Ascending aorta (tissue), 2 donors: ENCODE measurements at regions of chr1 and their contacts with region 1.

Region 1: GRCh38 chr1:160837558-160838205 is 25.0 kb downstream of the CD244 start:
- DNase-seq: peak in 1 of 2 donors; percentile 67
- H3K4me3 ChIP-seq: no peak overlapping the region
- H3K27ac ChIP-seq: no peak overlapping the region
- H3K4me1 ChIP-seq: no peaks in the 10 kb centered on the region
- H3K27me3 ChIP-seq: no peaks in the 10 kb centered on the region
- CTCF ChIP-seq: no peak

Region 2: GRCh38 chr1:160951443-160952128 is 113.9 kb after region 1 on chr1:
- intact Hi-C with region 1: loop called (anchors 5 kb)
- DNase-seq: no peak
- H3K4me3 ChIP-seq: no peak overlapping the region
- H3K27ac ChIP-seq: no peak overlapping the region
- H3K4me1 ChIP-seq: no peaks in the 10 kb centered on the region
- H3K27me3 ChIP-seq: no peaks in the 10 kb centered on the region
- CTCF ChIP-seq: peak; percentile 28 to 53 (median 29)